Left ventricle myocardium inferior (tissue), 1 donor: ENCODE measurements at regions of chr13 and their contacts with region 1.

Region 1: GRCh38 chr13:91722267-91722884 is 324.0 kb downstream of the GPC5 start:
- DNase-seq: no peak
- H3K4me3 ChIP-seq: no peak overlapping the region
- H3K27ac ChIP-seq: no peak overlapping the region
- H3K4me1 ChIP-seq: no peaks in the 10 kb centered on the region
- H3K27me3 ChIP-seq: no peaks in the 10 kb centered on the region
- CTCF ChIP-seq: peak; percentile 71

Region 2: DNA sequence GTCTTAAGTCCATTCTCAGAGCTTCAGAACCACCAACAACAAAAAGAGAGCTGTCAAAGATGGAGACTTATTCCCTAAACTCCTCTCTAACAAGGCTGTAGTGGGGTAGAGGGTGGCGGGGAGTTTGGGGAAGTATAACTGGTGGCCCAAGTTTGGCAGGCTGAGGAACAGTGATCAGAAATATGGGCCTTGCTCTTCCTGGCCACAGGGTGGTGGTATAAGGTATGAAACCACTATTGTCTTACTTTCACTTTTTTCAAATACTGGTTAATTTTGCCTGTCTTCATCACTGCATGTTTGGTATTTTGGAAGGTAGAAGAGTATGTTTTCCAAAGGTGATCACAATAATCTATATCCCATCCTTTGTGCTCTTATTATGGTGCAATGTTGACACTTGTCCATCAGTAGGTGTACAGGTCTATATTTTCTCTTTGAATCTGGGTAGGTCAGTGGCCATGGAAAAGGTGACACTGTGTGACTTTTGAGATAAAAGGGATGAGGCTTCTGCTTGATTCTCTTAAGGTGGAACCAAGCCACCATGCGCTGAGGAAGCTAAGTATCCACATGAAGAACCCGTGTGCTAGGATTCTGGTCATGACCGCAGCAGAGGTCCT is 347.2 kb before region 1 on chr13:
- intact Hi-C with region 1: loop called (anchors 10 kb)
- DNase-seq: no peak
- H3K4me3 ChIP-seq: no peak overlapping the region
- H3K27ac ChIP-seq: no peak overlapping the region
- H3K4me1 ChIP-seq: no peaks in the 10 kb centered on the region
- H3K27me3 ChIP-seq: no peaks in the 10 kb centered on the region
- CTCF ChIP-seq: peak; percentile 41